ENCODE measurements at regions of chr6 and their contacts with region 1.

Region 1: GRCh38 chr6:161393839-161394364 is 120.0 kb upstream of the AGPAT4 start:
- DNase-seq: no peak
- H3K4me3 ChIP-seq: no peak overlapping the region
- H3K27ac ChIP-seq: no peak overlapping the region
- H3K4me1 ChIP-seq: no peaks in the 10 kb centered on the region; a peak in 2 of 7 replicates
- H3K27me3 ChIP-seq: no peaks in the 10 kb centered on the region; a peak in 1 of 7 replicates
- CTCF ChIP-seq: peak in 2 of 3 experiments; percentile 54; a peak in 2 of 4 replicates
- EP300 ChIP-seq: no peak
- POLR2A ChIP-seq: no peak
- RAD21 ChIP-seq: peak; percentile 79 to 83

Region 2: DNA sequence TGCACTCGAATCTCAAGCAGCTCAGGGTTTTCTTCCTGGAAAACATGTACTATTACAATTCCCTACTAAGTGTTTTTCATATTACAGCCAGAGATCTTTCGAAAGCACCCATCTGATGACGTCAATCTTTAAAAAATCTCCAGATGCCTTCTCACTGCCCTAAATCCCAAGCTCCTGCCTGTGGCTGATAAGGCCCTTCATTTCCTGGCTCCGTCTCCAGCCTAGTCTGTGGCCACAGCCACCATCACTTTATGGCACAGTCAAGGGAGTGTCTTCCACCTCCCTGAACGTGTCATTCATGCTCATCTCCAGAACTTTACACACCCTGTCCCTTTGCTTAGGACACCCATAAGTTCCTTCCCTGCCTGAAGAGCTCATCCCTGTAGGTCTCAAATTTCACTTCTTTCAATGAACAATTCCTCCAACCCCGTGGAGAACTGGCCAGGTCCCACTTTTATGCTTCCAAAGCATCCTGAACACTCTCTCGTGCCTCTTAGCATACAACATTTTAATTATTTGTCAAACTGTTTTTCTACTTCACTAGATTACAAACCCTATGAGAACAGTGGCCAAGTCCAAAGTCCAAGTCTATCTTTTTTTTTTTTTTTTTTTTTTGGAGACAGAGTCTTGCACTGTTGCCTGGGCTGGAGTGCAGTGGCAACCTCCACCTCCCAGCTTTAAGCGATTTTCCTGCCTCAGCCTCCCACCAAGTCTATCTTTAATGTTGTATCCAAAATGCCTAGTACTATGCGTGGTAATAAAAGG is 13.9 kb before region 1 on chr6:
- CTCF ChIA-PET with region 1: interaction called, 12 read pairs
- POLR2A ChIA-PET with region 1: no interaction called
- DNase-seq: no peak
- H3K4me3 ChIP-seq: no peak overlapping the region
- H3K27ac ChIP-seq: no peak overlapping the region
- H3K4me1 ChIP-seq: no peaks in the 10 kb centered on the region
- H3K27me3 ChIP-seq: no peaks in the 10 kb centered on the region; a peak in 1 of 7 replicates
- CTCF ChIP-seq: no peak
- EP300 ChIP-seq: no peak
- POLR2A ChIP-seq: no peak
- RAD21 ChIP-seq: no peak

Region 3: DNA sequence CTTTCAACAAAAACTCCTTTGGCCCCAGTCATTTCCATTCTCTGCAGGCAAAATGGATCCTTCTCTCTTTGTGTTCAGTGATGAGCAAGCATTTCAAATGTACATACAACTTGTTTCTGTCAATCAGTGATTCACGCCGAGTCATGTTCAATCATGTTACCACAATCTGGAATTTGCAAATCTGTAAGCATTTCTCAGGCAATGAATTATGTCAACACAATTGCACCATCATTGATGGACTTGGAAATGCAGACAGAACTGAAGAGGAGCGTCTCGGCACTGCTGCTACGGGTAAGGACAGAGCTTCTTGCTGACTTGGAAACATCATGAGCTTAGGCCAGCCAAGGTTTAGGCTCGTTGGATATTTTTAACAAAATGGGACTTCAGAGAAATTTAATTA is 12.7 kb after region 1 on chr6:
- CTCF ChIA-PET with region 1: interaction called, 11 read pairs
- POLR2A ChIA-PET with region 1: no interaction called
- DNase-seq: no peak
- H3K4me3 ChIP-seq: no peak overlapping the region
- H3K27ac ChIP-seq: no peak overlapping the region
- H3K4me1 ChIP-seq: no peaks in the 10 kb centered on the region
- H3K27me3 ChIP-seq: no peaks in the 10 kb centered on the region
- CTCF ChIP-seq: no peak
- EP300 ChIP-seq: no peak
- POLR2A ChIP-seq: no peak
- RAD21 ChIP-seq: no peak